CD8-positive, alpha-beta T cell (primary cell): ENCODE measurements at regions of chr13 and their contacts with region 1.

Region 1: GRCh38 chr13:40671956-40672764 is 5.7 kb upstream of the FOXO1 start:
- DNase-seq: no peak
- ATAC-seq: no peak
- H3K4me3 ChIP-seq: no peak overlapping the region
- H3K4me3 Mint-ChIP-seq: no peak overlapping the region
- H3K27ac ChIP-seq: no peak overlapping the region
- H3K27ac Mint-ChIP-seq: no peak overlapping the region
- H3K4me1 ChIP-seq: peaks cover 13% of the 10 kb centered on the region
- H3K4me1 Mint-ChIP-seq: peaks cover 22% of the 10 kb centered on the region
- H3K27me3 ChIP-seq: no peaks in the 10 kb centered on the region
- H3K27me3 Mint-ChIP-seq: no peaks in the 10 kb centered on the region
- CTCF ChIP-seq: no peak

Region 2: DNA sequence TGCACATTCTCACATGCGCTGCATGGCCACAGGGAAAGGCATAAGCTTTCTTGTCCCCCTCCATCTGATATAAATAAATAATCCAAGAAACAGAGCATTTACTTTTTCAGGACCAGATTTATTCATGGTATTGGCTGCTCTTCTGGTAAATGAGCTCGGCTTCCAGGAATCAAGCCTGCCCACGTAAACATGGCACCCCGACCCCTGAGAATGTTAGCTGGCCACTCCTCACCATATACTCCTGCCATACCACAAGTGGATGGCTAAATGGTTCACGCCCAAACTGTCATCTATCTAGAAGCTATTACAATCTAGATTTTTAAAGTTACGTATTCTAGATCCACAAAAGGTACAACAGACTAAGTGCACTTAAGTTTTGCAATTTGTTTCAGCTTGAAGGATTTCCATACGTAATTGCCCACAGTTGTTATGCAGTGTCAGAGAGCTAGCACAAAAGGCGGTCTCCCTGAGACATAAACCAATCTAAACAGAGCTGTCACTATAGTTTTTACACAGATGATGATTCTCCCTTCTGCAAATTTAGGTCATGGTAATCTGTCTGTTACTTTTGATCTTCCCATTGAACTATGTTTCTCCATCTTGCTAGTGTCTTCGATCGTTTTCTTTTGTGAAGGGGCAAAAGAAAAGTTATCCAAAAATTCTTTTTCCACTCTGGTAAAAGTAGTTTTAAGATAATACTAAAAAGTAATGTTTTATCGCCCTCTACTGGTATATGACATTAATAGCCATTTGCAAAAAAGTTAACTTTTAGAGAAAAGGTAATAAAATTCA is 10.5 kb after region 1 on chr13:
- CTCF ChIA-PET with region 1: interaction called, 21 read pairs
- POLR2A ChIA-PET with region 1: interaction called, 4 read pairs
- intact Hi-C with region 1: loop called in 1 of 2 experiments (anchors 1 kb)
- DNase-seq: peak in 2 of 9 experiments; percentile 27 to 51
- ATAC-seq: peak; percentile 48
- H3K4me3 ChIP-seq: no peak overlapping the region
- H3K4me3 Mint-ChIP-seq: no peak overlapping the region
- H3K27ac ChIP-seq: no peak overlapping the region
- H3K27ac Mint-ChIP-seq: peak overlapping the region; percentile 6
- H3K4me1 ChIP-seq: peaks cover 6% of the 10 kb centered on the region
- H3K4me1 Mint-ChIP-seq: peaks cover 9% of the 10 kb centered on the region
- H3K27me3 ChIP-seq: no peaks in the 10 kb centered on the region
- H3K27me3 Mint-ChIP-seq: no peaks in the 10 kb centered on the region
- CTCF ChIP-seq: peak; percentile 87

Region 3: DNA sequence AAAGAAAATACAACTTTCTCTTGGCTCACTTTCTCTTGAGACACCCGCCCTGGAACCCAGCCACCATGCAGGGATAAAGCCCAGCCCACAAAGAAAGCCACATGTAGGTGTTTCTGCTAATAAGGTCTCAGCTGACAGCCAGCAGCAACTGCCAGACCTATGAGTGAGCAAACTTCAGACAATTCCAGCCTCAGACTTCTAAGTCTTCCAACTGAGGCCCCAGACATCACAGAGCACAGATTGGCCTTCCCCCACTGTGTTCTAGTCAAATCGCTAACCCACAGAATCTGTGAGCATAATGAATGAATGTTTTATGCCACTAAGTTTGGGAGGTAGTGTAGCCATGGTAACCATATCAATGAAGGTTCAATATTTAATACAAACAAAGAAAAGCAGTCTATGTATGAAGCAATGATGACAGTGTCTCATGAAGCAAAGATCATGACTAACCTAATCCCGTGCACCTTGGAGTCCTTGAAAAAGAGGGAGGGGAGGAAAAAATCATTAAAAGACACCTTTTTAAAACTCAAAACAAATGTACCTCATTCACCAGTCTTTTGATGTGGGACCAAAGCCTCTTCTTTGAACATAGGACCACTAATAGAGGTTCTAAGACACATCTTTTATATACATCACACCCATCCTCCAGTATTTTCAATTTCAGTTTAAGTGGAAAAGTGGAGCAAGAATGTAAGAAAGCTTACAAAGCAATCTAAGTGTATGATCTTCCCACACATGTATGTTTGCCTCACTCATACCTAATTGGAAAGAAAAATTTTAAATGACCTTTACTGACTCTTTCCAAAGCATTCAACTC is 92.6 kb after region 1 on chr13:
- CTCF ChIA-PET with region 1: interaction called, 3 read pairs
- POLR2A ChIA-PET with region 1: no interaction called
- intact Hi-C with region 1: loop called in 1 of 2 experiments (anchors 5 kb)
- DNase-seq: peak in 4 of 9 experiments; percentile 16 to 39 (median 32)
- ATAC-seq: peak; percentile 68
- H3K4me3 ChIP-seq: no peak overlapping the region
- H3K4me3 Mint-ChIP-seq: peak overlapping the region; percentile 15
- H3K27ac ChIP-seq: no peak overlapping the region
- H3K27ac Mint-ChIP-seq: peak overlapping the region; percentile 55
- H3K4me1 ChIP-seq: peaks cover 9% of the 10 kb centered on the region
- H3K4me1 Mint-ChIP-seq: peaks cover 55% of the 10 kb centered on the region
- H3K27me3 ChIP-seq: no peaks in the 10 kb centered on the region
- H3K27me3 Mint-ChIP-seq: no peaks in the 10 kb centered on the region
- CTCF ChIP-seq: no peak